ENCODE measurements at regions of chr11 and their contacts with region 1.

Region 1: DNA sequence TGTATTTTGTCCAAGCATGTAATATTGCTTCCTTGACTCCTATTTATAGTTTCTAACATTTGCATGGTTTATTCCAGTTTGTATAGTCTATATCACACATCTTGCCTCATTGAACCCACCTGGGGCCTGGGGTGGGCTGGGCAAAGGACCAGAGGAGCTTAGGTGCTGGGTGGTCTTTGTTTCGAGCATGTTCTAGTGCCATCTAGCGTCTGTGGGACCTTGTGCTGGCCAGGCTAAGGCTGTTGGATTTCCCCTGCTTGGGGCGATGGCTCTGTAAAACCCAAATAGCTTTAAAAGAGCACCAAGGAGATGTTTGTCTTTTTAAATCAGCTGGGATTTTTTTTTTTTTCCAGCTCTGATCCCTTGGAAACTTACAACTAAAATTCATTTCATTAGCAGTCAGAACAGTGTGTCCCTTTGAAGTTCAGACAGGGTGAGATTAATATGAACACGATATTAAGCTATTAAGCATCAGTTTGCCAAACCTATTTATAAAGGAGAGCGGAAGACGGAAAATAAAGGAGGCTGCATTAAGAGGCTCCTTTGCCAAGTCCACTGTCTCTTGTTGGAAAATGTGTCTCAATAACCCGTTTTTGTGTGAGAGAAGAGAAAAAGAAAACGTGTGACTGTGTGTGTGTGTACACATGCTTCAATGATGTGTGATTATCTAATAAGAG is 157.4 kb downstream of the COMMD9 start:
- DNase-seq: peak in 41 of 42 donors; percentile 42 to 88 (median 69)

Region 2: GRCh38 chr11:35822815-35823495 is 308.9 kb before region 1 on chr11:
- intact Hi-C with region 1: loop called (anchors 5 kb)
- DNase-seq: no peak

Region 3: GRCh38 chr11:36034551-36035331 is 97.1 kb before region 1 on chr11:
- intact Hi-C with region 1: loop called (anchors 5 kb)
- DNase-seq: no peak

Measured in head of caudate nucleus (tissue), 42 donors.